ENCODE measurements at regions of chr15 and their contacts with region 1.

Region 1: DNA sequence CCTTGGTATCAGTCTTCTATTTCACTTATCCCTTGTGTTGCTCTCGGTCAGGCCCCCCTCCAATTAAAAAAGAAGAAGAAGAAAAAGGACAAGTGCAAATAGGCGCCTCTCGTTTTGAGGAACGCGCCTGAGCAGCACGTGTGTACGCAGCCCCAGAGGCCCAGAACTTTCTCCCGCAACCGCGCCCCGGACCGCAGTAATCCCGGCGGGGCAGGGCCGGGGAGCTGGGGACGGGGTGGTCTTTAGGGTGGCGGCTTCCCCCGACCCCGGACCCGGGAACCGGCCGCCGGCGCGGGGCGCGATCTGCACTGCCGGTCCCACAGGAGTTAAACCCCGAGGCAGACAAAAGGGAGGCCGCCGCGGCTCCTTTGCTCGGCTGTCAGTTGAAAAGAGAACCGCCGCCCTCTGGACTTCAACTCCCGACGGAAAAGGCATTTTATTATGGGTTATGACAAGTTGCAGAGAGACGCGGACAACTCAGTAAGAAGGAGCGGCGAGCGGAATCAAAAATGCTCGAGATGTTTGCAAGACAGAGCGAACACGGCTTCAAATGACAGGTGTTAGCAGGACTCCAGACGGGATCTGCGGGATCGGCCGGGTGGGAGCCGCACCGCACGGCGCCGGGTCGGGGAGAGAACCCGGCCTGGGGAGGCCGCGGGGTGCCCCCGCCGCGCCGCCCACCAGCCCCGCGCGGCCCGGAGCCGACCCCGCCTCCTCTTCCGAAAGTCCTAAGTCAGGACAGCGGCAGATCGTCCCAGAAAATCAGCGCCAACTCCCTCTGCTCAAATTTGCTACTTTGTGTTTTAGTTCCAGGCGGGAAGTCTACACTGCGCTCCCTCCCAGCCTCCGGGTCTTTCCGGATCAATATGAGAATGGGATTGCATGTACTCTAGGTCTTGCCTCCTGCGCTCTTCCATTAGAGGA is 79.0 kb downstream of the NR2F2 start:
- DNase-seq: peak; percentile 8
- ATAC-seq: no peak
- H3K4me3 Mint-ChIP-seq: no peak overlapping the region
- H3K27ac Mint-ChIP-seq: no peak overlapping the region
- H3K4me1 Mint-ChIP-seq: peaks cover 3% of the 10 kb centered on the region
- H3K27me3 Mint-ChIP-seq: peaks cover 65% of the 10 kb centered on the region

Region 2: DNA sequence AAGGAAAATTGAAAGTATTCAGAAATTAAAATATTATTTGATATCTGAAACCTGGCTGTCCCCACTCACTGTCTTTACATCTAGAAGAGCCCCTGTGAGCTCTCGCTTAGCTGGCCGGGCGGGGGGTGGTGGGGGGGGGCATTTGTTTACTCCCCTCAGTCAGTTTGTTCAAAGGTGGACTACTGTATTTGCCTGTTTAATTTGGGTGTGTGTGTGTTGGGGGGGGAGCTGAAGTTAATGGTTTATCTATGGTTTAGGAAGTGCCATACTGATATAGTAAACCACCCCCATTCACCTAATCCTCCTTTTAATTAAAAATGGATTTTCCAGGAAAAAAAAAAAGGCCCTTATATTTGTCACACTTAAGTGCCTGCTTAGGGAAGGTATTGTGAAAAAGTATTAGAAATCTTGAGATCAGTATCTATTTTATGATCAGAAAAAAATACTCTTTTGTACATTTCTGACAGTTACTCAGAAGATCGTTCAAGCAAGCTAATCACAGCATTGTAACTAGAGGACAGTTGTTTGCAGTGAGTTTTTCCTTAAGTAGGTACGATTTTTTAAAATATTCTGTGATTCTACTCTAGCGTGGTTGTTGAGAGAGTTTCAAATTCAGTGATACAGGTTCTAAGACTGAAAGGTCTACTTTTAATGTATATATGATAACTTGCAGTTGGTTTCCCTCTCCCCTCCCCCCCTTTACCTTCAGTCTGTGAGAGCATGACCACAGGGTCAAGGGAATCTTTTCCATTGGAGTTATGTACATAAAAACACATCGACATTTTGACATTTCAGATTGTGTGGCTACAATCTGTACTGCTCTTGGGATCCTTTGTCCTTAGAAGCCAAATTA is 70.5 kb before region 1 on chr15:
- CTCF ChIA-PET with region 1: interaction called, 3 read pairs
- POLR2A ChIA-PET with region 1: no interaction called
- intact Hi-C with region 1: loop called in 1 of 2 experiments (anchors 2 kb)
- DNase-seq: no peak
- ATAC-seq: no peak
- H3K4me3 Mint-ChIP-seq: no peak overlapping the region
- H3K27ac Mint-ChIP-seq: no peak overlapping the region
- H3K4me1 Mint-ChIP-seq: peaks cover 3% of the 10 kb centered on the region
- H3K27me3 Mint-ChIP-seq: peaks cover 74% of the 10 kb centered on the region

Region 3: DNA sequence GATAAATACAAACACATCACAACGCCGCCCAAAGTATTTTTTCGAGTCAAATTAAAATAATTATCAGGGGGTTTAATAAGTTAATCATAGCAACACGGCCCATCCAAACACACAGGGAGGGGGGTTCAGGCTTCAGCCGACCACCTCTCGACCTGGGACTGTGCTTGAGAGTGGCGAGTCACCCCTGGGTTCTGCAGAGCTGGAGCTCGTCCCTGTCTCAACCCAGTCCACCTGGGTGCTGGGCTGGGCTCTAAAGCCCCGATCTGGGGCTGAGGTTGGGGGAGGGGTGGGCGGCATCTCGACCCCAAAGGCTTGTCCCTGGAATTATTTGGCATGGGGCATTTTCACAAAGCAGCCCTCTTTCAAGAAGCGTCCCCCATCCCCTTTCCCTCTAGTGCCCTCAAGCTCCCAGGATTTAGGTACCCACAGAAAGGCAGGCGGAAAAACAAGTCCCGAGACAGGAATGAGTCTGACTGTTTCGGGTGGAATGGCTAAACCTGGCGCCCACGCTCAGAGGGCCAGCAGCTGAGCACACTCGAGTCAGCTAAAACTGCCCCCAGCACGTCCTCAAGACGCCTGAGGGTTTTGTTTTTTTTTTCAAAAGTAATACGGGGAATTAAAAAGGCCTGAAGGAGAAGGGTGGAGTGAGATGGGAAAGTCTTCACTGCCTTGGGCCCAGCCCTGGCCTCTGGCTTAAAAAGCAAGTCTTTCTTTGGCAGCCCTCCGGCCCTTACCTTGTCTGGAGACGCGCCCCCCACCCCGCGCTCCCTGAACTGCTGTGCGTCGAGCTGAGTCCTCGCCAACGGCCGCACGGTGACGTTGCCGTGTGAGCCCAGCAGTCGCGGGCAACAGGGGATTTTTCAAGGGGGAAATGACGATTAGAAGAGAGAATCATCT is 46.5 kb before region 1 on chr15:
- CTCF ChIA-PET with region 1: no interaction called
- POLR2A ChIA-PET with region 1: no interaction called
- intact Hi-C with region 1: loop called (anchors 2 to 5 kb)
- DNase-seq: no peak
- ATAC-seq: no peak
- H3K4me3 Mint-ChIP-seq: no peak overlapping the region
- H3K27ac Mint-ChIP-seq: no peak overlapping the region
- H3K4me1 Mint-ChIP-seq: peaks cover 4% of the 10 kb centered on the region
- H3K27me3 Mint-ChIP-seq: peaks cover 71% of the 10 kb centered on the region

Region 4: GRCh38 chr15:97126553-97127233 is 717.2 kb after region 1 on chr15:
- CTCF ChIA-PET with region 1: no interaction called
- POLR2A ChIA-PET with region 1: no interaction called
- intact Hi-C with region 1: no loop called
- DNase-seq: no peak
- ATAC-seq: no peak
- H3K4me3 Mint-ChIP-seq: no peak overlapping the region
- H3K27ac Mint-ChIP-seq: no peak overlapping the region
- H3K4me1 Mint-ChIP-seq: no peaks in the 10 kb centered on the region
- H3K27me3 Mint-ChIP-seq: no peaks in the 10 kb centered on the region

Measured in activated CD4-positive, alpha-beta T cell treated with anti-CD3 and anti-CD28 coated beads for 36 hours (primary cell).